ENCODE measurements at regions of chr15 and their contacts with region 1.

Region 1: DNA sequence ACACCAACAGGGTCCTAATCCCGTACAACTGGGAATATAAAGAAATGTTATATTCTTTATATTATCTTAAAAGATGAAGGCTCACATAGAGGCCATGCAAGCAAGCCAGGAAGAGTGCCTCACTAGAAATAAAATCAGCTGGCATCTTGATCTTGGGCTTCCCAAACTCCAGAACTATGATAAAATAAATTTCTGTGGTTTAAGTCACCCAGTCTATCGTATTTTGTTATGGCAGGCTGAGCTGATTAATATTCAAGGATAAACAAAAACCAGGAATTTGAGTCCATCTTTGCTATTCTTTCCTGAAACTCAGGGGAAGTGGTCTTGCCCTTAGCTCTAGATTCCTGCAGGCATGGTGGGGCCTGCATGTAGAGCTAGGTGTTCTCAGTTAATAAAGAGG is 42.7 kb downstream of the ATOSA start:
- DNase-seq: no peak
- H3K4me3 ChIP-seq: no peak overlapping the region
- H3K27ac ChIP-seq: no peak overlapping the region
- H3K4me1 ChIP-seq: no peaks in the 10 kb centered on the region
- H3K27me3 ChIP-seq: no peaks in the 10 kb centered on the region
- CTCF ChIP-seq: no peak
- POLR2A ChIP-seq: no peak

Region 2: DNA sequence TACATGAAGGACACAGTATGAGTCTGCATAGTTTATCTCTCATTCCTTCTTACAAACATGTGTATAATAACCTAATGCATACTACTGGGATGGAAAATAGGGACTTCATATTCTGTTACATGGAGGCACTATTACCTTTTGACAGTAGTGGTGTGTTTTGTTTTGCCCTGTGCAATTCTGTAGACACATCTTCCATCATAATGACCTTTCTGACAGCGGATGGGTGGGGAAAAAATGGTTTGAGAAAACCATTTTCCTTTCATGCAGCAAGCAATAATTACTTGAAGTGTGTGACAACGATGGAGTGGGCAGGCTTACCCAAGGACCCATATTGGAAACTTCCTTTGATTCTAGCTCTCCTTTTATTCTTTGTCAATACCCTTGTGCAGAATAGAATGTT is 307.3 kb after region 1 on chr15:
- intact Hi-C with region 1: no loop called
- DNase-seq: no peak
- H3K4me3 ChIP-seq: no peak overlapping the region
- H3K27ac ChIP-seq: no peak overlapping the region
- H3K4me1 ChIP-seq: no peaks in the 10 kb centered on the region
- H3K27me3 ChIP-seq: no peaks in the 10 kb centered on the region
- CTCF ChIP-seq: no peak
- POLR2A ChIP-seq: no peak

Region 3: DNA sequence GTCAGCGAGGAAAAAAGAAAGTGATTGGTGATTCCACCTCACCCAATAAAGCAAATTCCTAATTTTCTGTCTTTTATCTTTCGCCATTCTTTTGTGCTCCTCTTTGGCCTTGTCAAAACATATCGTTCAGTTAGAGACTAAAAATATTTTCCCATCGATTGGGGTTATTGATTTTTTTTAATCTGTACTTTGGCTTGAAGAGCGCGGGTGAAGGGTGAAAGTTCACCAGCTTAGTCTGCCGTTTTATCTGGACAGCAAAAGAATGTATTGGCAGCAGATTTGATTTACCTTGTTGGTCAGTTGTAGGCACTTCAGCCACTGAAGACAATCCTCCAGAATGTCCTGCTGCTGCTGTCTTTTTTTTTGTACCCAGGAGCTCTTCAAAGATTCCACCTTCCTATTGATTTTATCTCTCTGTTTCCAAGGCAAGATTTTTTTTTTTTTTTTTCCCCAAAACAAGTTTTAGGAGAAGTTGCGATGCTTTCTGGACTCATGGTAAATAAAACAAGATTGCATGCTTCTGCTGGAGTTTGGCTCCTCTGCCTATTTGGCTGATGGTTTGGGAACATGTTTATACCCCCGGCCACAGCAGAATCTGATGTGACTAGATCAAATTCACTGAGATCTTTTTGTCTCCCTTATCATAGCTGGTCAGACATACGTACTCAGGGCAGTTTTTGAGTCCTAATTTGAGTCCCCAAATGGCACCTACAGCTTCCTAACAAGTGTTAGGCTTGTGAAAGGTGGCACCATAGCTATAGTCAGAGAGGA is 423.0 kb after region 1 on chr15:
- intact Hi-C with region 1: loop called (anchors 5 kb)
- DNase-seq: no peak
- H3K4me3 ChIP-seq: no peak overlapping the region
- H3K27ac ChIP-seq: no peak overlapping the region
- H3K4me1 ChIP-seq: no peaks in the 10 kb centered on the region
- H3K27me3 ChIP-seq: no peaks in the 10 kb centered on the region
- CTCF ChIP-seq: no peak
- POLR2A ChIP-seq: no peak

Measured in vagina (tissue), 2 donors.